ENCODE measurements at regions of chr11 and their contacts with region 1.

Region 1: DNA sequence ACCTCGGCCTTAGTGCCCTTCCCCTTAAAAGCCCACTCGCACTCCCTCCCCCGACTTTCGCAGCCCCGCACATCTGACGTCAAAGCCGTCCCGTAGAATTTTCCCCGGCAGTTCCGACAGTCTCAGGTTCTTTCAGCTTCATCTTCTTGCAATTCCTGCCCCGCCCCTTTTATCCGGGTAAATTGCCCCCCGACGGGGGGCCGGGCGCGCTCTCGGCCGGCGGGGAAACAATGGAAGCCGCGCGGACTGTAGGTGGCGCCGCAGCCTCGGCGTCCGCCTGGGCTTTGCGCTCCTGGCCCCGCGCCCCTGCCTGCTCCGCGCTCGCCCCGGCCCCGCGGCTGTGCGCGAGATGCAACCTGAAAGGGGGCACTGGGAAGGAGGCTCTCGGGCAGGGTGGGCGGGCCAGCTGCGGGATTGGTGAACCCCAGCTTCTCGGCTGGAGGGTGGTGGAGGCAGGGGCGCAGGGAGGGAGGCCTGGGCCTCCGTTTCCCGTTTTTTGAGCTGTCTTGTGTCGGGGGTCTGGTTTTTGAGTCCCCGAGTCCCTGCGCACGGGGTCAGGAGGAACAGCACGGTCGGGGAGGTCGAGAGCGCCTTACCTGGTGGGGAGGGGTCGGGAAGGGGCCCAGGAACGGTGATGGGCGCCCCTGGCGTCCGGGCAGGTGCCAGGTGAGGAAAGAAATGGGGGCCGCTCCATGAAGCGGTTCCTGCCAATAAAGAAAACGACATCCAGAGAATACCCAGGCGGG is 859 bp upstream of the FGF19 start:
- DNase-seq: no peak
- ATAC-seq: peak; percentile 64
- H3K4me3 ChIP-seq: no peak overlapping the region
- H3K27ac ChIP-seq: no peak overlapping the region
- H3K4me1 ChIP-seq: peaks cover 2% of the 10 kb centered on the region
- H3K27me3 ChIP-seq: peaks cover 68% of the 10 kb centered on the region
- CTCF ChIP-seq: peak; percentile 61
- POLR2A ChIP-seq: no peak
- RAD21 ChIP-seq: peak; percentile 69

Region 2: GRCh38 chr11:69791276-69792180 is 86.8 kb after region 1 on chr11:
- CTCF ChIA-PET with region 1: no interaction called
- POLR2A ChIA-PET with region 1: no interaction called
- dilution Hi-C with region 1: no loop called
- in situ Hi-C with region 1: no loop called
- intact Hi-C with region 1: loop called (anchors 5 kb)
- DNase-seq: peak; percentile 61
- ATAC-seq: peak; percentile 89
- H3K4me3 ChIP-seq: no peak overlapping the region
- H3K27ac ChIP-seq: no peak overlapping the region
- H3K4me1 ChIP-seq: peaks cover 2% of the 10 kb centered on the region; the same call in 1 of the 2 replicates
- H3K27me3 ChIP-seq: peaks cover 47% of the 10 kb centered on the region
- CTCF ChIP-seq: no peak
- POLR2A ChIP-seq: no peak
- RAD21 ChIP-seq: no peak

Region 3: DNA sequence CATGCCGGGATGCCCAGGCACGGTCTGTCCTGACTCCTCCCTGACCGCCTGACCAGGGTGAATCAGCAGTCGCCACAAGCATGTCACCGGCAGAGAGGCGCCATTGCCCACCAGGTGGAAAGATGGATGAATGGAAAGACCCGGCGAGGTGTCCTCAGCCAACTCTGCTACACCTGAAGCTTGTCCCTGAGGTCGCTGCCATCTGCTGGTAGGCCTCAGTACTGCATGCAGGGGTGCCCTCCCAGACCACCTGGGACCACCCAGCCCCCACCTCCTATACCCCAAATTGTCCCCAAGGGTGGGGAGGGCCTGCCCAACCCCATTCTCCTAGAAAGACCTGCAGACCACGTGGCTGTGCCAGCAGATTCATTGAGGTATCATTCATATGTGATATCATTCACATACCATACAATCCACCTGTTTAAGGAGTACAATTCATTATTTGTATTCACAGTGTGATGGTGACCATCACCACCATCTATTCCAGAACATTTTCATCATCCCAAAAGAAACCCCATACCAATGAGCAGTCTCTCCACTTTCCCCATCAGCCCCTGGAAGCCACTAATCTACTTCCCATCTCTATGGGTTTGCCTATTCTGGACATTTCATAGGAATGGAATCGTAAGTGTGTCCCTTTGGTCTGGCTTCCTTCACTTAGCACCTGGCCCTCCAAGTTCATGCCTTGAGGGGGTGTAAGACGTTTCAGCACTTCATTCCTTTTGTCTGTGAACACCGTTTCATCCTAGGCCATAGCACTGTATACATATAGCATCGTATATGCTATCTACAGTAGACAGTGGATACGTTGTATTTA is 97.0 kb after region 1 on chr11:
- CTCF ChIA-PET with region 1: interaction called, 3 read pairs
- POLR2A ChIA-PET with region 1: no interaction called
- dilution Hi-C with region 1: no loop called
- in situ Hi-C with region 1: loop called (anchors 10 kb)
- intact Hi-C with region 1: no loop called
- DNase-seq: no peak
- ATAC-seq: peak; percentile 62
- H3K4me3 ChIP-seq: no peak overlapping the region
- H3K27ac ChIP-seq: no peak overlapping the region
- H3K4me1 ChIP-seq: no peaks in the 10 kb centered on the region
- H3K27me3 ChIP-seq: peaks cover 29% of the 10 kb centered on the region
- CTCF ChIP-seq: peak; percentile 63
- POLR2A ChIP-seq: no peak
- RAD21 ChIP-seq: peak; percentile 55

Region 4: DNA sequence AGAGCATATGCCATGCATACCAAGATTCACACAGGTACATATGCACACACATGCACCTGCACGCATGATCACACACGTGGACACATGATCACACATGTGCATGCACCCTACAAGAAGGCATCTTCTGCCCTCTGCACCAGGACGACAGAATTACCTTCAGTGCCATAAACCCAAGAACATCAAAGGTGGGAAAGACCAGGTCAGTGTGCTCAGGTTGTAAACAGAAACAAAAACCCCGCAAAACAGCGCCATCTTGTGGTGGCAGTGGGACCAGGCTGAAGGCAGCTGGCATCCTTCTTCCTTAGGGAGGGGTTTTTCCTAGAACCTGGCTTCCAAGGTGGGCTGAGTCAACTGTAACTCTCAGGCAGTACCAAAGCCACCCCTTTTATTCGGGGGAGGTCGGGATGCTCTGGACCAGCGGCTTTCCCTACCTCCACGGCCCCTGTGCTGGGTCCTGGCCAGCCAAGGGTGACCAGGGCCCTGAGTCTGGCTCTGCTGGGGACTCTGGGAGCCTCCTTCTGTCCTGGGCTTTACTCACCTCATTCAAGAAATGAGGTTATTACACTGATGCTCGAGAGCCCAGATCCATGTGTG is 183.9 kb after region 1 on chr11:
- CTCF ChIA-PET with region 1: no interaction called
- POLR2A ChIA-PET with region 1: no interaction called
- dilution Hi-C with region 1: no loop called
- in situ Hi-C with region 1: no loop called
- intact Hi-C with region 1: loop called (anchors 5 kb)
- DNase-seq: peak; percentile 38
- ATAC-seq: peak; percentile 76
- H3K4me3 ChIP-seq: no peak overlapping the region
- H3K27ac ChIP-seq: no peak overlapping the region
- H3K4me1 ChIP-seq: peaks cover 7% of the 10 kb centered on the region; the same call in 1 of the 2 replicates
- H3K27me3 ChIP-seq: peaks cover 22% of the 10 kb centered on the region
- CTCF ChIP-seq: peak; percentile 82
- POLR2A ChIP-seq: no peak
- RAD21 ChIP-seq: peak; percentile 73

Measured in IMR-90 (cell line).